ENCODE measurements at regions of chr6 and their contacts with region 1.

Region 1: DNA sequence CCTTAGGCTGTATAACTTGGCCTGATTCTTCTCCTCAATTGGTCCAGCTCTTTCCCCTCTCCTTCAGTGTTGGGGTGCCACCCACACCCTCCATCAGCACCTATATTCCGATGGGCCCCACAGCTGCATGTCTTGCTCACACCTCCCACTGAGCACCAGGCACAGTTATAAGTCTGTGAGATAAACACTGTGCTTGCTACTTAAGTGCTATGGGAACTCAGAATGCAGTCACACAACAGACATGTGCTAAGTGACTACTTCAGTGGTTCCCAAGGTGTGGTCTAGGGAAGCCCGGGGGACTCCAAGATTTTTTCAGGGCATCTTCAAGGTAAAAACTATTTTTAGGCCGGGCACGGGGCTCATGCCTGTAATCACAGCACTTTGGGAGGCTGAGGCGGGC is 7.3 kb downstream of the ZC3H12D start:
- DNase-seq: no peak
- H3K4me3 Mint-ChIP-seq: no peak overlapping the region
- H3K27ac Mint-ChIP-seq: no peak overlapping the region
- H3K4me1 Mint-ChIP-seq: no peaks in the 10 kb centered on the region
- H3K27me3 Mint-ChIP-seq: peaks cover 21% of the 10 kb centered on the region
- CTCF ChIP-seq: no peak

Region 2: DNA sequence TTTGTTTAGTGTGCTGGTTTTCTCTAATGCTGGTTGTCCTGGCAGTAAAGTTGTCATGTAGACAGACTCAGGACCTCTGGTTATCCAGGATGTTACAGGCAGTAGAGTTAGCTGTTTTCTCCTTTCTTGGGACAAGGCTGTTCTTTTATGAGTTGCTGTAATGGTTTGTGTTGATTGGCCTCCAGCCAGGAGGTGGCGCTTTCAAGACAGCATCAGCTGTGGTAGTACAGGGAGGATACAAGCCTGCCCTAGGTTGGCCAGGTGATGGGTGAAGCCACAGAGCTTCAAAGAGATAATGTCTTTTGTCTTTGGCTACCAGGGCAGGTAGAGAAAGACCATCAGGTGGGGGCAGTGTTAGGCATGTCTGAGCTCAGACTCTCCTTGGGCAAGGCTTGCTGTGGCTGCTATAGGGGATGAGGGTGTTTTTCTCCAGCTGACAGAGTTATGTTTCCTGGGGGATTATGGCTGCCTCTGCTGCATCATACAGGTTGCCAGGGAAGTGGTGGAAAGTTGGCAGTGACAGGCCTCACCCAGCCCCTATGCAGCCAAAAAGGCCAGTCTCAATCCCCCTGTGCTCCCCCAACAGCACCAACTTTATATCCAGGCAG is 287.2 kb before region 1 on chr6:
- CTCF ChIA-PET with region 1: no interaction called
- intact Hi-C with region 1: no loop called
- DNase-seq: peak; percentile 36
- H3K4me3 Mint-ChIP-seq: no peak overlapping the region
- H3K27ac Mint-ChIP-seq: no peak overlapping the region
- H3K4me1 Mint-ChIP-seq: no peaks in the 10 kb centered on the region
- H3K27me3 Mint-ChIP-seq: no peaks in the 10 kb centered on the region
- CTCF ChIP-seq: no peak

Region 3: DNA sequence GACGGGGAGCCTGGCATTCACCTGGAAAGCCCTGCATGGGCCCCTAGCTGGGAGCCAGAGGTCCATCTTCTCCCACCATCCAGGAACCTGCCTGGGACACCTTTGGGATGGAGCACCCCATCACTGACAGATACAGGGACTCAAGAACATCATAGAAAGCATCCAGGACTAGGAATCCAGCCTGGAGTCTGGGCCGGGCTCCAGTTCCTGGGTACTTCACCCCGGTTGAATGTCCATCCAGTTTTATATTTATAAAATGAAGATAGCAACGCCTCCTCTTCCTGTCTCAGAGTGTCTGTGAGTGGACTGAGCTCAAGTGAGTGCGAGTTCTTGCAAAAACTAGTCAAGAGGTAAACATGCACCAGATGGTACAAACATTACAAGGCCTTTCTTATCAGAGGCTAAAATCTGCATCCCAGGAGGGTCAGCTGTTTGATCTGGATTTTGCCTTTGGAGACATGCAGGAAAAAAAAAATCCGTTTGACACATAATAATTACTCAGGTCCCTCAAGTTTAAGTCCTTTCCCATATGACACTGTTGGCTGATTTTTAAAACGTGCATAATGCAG is 20.1 kb before region 1 on chr6:
- CTCF ChIA-PET with region 1: no interaction called
- intact Hi-C with region 1: no loop called
- DNase-seq: no peak
- H3K4me3 Mint-ChIP-seq: no peak overlapping the region
- H3K27ac Mint-ChIP-seq: no peak overlapping the region
- H3K4me1 Mint-ChIP-seq: no peaks in the 10 kb centered on the region
- H3K27me3 Mint-ChIP-seq: no peaks in the 10 kb centered on the region
- CTCF ChIP-seq: no peak

Region 4: DNA sequence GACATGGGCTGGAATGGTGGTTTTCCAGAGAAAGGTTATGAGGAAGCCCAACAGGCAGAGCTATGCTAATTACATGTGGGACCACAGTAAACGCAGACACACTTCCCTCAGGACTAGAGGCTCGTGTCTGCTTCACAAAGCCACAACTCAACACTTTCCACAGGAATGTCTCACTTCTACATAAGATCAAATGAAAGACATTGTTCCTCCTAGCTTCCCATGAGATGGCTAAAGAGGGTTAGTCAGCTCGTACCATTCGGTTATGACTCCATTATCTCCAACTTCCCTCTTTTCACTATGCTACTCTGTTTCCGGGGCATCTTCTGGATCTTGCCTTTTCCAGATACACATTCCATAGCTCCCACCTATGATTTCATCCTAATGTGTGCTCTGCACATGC is 36.4 kb after region 1 on chr6:
- CTCF ChIA-PET with region 1: no interaction called
- intact Hi-C with region 1: loop called (anchors 2 kb)
- DNase-seq: no peak
- H3K4me3 Mint-ChIP-seq: no peak overlapping the region
- H3K27ac Mint-ChIP-seq: no peak overlapping the region
- H3K4me1 Mint-ChIP-seq: no peaks in the 10 kb centered on the region
- H3K27me3 Mint-ChIP-seq: no peaks in the 10 kb centered on the region
- CTCF ChIP-seq: no peak

Measured in Calu3 (cell line).